Ascending aorta (tissue), 2 donors: ENCODE measurements at regions of chr12 and their contacts with region 1.

Region 1: DNA sequence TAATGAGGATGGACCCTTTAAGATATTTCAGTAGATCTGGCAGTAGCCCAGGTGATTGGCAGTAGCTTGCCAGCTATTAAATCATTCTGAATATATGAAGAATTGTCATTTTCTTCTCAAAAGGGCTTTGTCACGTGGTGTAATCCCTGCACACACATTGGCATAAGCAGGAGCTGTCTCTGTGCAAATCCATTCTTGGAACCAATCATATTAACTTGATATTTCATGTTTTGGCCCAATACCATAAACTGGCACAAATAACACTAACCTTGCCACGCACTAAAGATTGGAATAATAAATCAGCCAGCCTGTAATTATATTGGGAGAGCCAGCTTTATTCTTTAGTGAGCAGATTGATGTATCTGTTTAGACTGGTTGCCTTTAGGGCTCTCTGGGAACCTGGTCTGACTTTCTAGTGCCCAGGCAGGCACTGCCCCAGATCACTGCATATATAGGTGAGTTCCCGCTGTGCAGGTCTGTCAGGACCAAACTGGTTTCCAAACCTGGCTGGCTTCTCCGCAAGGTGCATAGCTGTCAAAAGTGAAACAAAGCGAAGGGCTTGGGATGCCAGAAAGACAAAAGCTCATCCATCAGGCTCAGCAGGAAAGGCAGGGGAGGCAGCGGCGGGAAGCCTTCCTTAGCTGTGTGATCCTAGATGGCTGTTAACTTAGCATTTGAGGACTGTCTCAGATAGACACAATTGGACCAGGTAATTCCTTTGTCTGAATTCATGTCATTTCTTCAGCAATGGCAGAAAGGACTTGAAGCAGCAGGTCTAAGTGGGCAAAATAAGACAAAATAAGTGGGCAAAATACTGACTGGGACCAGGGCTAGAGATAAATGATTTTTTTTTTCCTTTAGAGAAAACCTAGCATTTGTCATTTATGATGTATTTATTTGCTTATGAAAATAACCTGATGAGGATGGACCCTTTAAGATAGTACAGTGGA is 128.8 kb upstream of the DYRK2 start:
- DNase-seq: no peak
- H3K4me3 ChIP-seq: no peak overlapping the region
- H3K27ac ChIP-seq: no peak overlapping the region
- H3K4me1 ChIP-seq: peaks cover 0 to 13% of the 10 kb centered on the region in 2 donors
- H3K27me3 ChIP-seq: no peaks in the 10 kb centered on the region
- CTCF ChIP-seq: no peak

Region 2: GRCh38 chr12:67546746-67547145 is 27.0 kb after region 1 on chr12:
- intact Hi-C with region 1: loop called (anchors 2 kb)
- DNase-seq: no peak
- H3K4me3 ChIP-seq: no peak overlapping the region
- H3K27ac ChIP-seq: no peak overlapping the region
- H3K4me1 ChIP-seq: no peaks in the 10 kb centered on the region
- H3K27me3 ChIP-seq: no peaks in the 10 kb centered on the region
- CTCF ChIP-seq: no peak

Region 3: DNA sequence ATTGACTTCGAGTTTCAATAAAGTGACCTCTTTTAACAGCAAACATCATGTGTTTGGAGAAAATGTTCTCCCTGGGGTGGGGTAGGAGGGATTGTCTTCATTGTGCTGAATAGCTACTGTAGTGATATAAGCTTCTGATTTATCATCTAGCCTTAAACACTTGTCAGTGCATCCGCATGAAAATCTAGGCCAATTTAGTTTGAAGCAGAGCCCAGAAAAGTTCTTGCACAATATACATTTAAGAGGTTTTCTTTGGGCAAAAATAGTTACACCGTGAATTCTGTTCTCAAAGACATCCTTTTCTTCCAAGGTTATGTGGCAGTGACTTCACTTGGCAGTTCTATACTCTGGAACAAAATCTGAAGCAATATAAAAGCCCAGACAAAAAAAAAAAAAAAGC is 333.4 kb after region 1 on chr12:
- intact Hi-C with region 1: no loop called
- DNase-seq: no peak
- H3K4me3 ChIP-seq: no peak overlapping the region
- H3K27ac ChIP-seq: no peak overlapping the region
- H3K4me1 ChIP-seq: no peaks in the 10 kb centered on the region
- H3K27me3 ChIP-seq: no peaks in the 10 kb centered on the region
- CTCF ChIP-seq: no peak